ENCODE measurements at regions of chr19 and their contacts with region 1.

Region 1: DNA sequence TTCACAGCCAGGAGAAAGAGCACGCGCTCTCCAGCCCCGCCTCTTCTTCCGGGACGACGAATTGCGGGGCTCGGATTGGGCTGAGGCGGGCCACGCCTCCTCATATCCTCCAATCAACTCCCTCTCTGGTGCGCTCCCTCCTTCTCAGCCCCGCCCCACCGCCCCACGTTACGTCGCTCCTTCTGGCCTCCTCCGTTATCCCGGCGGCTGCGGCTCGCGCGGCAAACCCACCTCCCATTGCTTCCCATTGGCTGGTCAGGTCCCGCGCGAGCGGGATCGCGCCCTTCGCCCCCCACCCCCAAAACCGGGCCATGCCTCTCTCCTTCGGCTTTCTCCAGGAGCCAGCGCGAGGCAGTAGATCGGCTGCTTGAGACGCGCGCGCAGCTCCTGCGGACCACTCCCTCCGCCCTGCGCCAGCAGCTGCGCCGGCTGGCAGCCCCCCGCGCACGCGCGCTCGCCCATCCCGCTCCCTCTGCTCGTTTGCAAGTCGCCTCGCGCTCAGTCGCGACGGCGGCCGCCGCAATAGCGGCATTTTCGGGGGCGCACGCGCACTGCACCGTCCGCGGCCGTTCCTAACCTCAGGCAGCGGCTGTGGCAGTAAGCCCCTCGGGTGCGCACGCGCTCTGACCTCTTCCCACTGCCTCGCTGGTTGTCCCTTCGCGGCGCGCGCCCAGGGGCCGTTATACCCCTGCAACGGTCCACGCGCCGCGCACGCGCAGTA is 512 bp upstream of the ARHGAP35 start:
- DNase-seq: peak; percentile 91
- H3K4me3 ChIP-seq: peak overlapping the region; percentile 86
- H3K27me3 ChIP-seq: no peaks in the 10 kb centered on the region
- CTCF ChIP-seq: no peak

Region 2: DNA sequence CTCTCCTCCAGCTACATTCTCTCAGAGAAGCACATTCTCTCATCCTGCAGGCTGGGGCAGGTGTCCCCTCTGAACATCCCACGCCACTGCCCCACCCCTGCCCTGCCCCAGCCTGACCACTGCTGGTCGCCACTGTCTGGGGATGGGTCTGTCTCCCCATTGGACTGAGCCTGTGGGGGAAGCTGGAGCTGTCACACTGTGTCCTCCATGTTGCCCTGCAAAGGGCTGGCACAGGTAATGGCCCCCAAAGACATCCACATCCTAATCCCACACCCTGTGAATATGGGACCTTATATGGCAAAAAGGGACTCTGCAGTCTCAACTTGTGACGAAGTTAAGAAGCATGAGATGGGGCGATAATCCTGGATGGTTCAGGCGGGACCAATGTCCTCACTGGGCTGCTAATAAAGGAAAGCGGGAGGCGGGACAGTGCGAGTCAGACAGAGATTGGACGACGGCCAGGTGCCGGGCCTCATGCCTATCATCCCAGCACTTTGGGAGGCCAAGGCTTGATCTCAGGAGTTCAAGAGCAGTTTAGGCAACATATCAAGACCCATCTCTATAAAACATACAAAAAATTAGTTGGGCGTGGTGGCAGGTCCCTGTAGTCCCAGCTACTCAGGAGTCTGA is 18.7 kb before region 1 on chr19:
- CTCF ChIA-PET with region 1: no interaction called
- POLR2A ChIA-PET with region 1: no interaction called
- DNase-seq: no peak
- H3K4me3 ChIP-seq: no peak overlapping the region
- H3K27me3 ChIP-seq: no peaks in the 10 kb centered on the region
- CTCF ChIP-seq: no peak

Region 3: DNA sequence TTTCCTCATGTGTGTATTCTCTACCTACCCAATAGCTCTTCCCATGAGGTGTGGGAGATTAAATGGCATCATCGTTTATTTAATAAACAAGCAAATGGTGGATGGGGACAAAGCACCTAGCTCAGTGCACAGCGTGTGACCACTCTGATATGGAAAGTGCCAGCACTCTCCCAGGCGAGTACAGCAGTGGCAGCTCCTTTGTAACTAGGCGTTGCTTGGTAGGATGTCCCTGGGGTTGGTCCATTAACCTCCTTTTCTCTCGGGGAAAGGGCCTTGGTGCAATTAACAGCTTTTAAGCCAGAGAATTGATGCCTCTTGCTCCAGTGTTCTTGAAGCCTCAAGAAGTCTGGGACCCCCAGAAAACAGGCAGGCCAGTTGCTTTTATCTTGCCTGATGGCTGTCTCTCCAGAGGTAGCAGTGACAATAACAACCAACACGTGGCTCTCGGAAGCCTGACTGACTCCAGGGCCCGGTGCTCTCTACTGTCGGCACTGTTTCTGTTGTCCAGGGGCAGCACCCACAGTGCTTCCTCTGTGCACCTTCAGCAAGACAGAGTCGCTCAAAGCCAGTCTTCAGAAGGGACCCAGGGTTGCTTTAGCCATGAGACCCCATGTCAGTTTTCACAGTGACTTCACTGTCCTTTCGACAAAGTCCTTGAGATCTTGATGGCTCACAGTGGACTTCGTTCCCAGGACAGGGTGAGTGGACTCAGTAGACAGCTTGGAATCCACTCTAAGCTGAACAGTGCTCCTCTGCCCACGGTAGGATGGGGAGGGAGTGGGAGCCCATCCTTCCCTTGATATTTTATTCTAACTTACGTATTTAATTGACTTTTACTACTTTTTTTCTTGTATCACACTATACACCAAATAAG is 125.5 kb after region 1 on chr19:
- CTCF ChIA-PET with region 1: interaction called, 108 read pairs
- POLR2A ChIA-PET with region 1: no interaction called
- DNase-seq: no peak
- H3K4me3 ChIP-seq: no peak overlapping the region
- H3K27me3 ChIP-seq: no peaks in the 10 kb centered on the region
- CTCF ChIP-seq: no peak

Region 4: DNA sequence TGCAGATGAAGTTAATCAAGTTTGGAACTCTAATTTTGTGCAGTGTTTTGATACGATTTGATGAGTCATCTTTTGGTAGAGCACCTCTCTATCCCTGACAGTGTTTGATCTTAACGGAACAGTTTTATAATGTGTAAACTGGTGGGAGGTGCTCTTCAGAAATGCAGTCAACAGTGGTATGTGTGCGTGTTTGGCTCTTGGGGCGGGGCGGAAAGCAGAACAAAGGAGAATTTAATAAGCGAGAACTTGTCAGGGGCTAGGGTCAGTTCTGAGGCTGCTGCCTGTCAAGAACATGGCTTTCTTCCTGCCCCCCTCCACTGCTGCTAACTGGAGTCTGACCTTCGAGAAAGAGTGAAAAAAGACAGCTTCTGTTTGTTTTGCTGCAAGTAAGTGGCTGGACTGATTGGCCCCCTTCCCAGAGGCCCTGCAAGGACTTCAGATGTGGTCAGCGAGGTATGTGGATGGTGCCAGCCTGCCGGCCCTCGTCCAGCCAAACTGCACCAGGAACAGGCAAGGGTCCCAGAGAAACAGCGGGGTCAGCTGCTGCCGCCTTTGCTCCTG is 330.0 kb after region 1 on chr19:
- CTCF ChIA-PET with region 1: no interaction called
- POLR2A ChIA-PET with region 1: no interaction called
- DNase-seq: no peak
- H3K4me3 ChIP-seq: no peak overlapping the region
- H3K27me3 ChIP-seq: no peaks in the 10 kb centered on the region
- CTCF ChIP-seq: no peak

Measured in BJ (cell line).